HepG2 (cell line): ENCODE measurements at regions of chr3 and their contacts with region 1.

Region 1: GRCh38 chr3:138329127-138329983 is at the start of gene NME9:
- DNase-seq: peak; percentile 87
- ATAC-seq: peak; percentile 97
- H3K4me3 ChIP-seq: peak within 1 kb of the TSS; percentile 60 to 71 (median 64)
- H3K27ac ChIP-seq: no peak within 1 kb of the TSS
- H3K4me1 ChIP-seq: peaks cover 14% of the 10 kb centered on the region
- H3K27me3 ChIP-seq: no peaks in the 10 kb centered on the region
- CTCF ChIP-seq: peak; percentile 77
- EP300 ChIP-seq: no peak
- POLR2A ChIP-seq: no peak
- RAD21 ChIP-seq: 0 out of 2 replicates have a peak, but pooled peaks have one; percentile 17
- total RNA-seq, gene NME9: not detected in 2 replicates

Region 2: DNA sequence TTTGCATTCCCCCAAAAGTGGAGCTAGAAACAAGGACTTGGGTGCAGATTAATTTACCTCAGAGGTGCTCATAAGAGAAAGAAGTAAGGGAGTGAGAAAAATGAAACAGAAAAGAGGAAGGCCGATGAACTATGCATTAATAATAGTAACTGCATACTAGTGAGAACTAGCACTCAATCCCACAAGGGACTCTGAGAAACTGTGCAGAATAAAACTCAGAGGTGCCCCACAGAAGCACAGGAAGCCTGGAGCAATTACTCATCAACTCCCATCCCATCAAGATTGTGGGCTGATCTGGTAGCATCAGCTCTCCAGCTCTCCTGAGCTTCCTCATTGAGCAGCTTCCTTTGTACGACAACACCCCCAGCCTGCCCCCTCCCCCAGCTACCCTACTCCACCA is 268.6 kb before region 1 on chr3:
- CTCF ChIA-PET with region 1: no interaction called
- POLR2A ChIA-PET with region 1: no interaction called
- in situ Hi-C with region 1: no loop called
- intact Hi-C with region 1: no loop called
- DNase-seq: no peak
- ATAC-seq: no peak
- H3K4me3 ChIP-seq: no peak overlapping the region
- H3K27ac ChIP-seq: no peak overlapping the region
- H3K4me1 ChIP-seq: no peaks in the 10 kb centered on the region
- H3K27me3 ChIP-seq: no peaks in the 10 kb centered on the region
- CTCF ChIP-seq: no peak
- EP300 ChIP-seq: no peak
- POLR2A ChIP-seq: no peak
- RAD21 ChIP-seq: no peak

Region 3: GRCh38 chr3:138180375-138181029 is 148.9 kb before region 1 on chr3:
- CTCF ChIA-PET with region 1: no interaction called
- POLR2A ChIA-PET with region 1: no interaction called
- in situ Hi-C with region 1: loop called (anchors 10 kb)
- intact Hi-C with region 1: loop called (anchors 1 kb)
- DNase-seq: peak; percentile 50
- ATAC-seq: peak; percentile 93
- H3K4me3 ChIP-seq: no peak overlapping the region
- H3K27ac ChIP-seq: no peak overlapping the region
- H3K4me1 ChIP-seq: peaks cover 23% of the 10 kb centered on the region
- H3K27me3 ChIP-seq: peaks cover 0 to 2% of the 10 kb centered on the region in 2 experiments; a peak in 2 of 5 replicates
- CTCF ChIP-seq: peak; percentile 81
- EP300 ChIP-seq: no peak
- POLR2A ChIP-seq: no peak
- RAD21 ChIP-seq: peak; percentile 52; the same call in 1 of the 2 replicates

Region 4: GRCh38 chr3:138265745-138266144 is 63.6 kb before region 1 on chr3:
- CTCF ChIA-PET with region 1: no interaction called
- POLR2A ChIA-PET with region 1: no interaction called
- in situ Hi-C with region 1: no loop called
- intact Hi-C with region 1: loop called (anchors 5 kb)
- DNase-seq: no peak
- ATAC-seq: no peak
- H3K4me3 ChIP-seq: no peak overlapping the region
- H3K27ac ChIP-seq: no peak overlapping the region
- H3K4me1 ChIP-seq: no peaks in the 10 kb centered on the region
- H3K27me3 ChIP-seq: no peaks in the 10 kb centered on the region
- CTCF ChIP-seq: no peak
- EP300 ChIP-seq: no peak
- POLR2A ChIP-seq: no peak
- RAD21 ChIP-seq: no peak

Region 5: DNA sequence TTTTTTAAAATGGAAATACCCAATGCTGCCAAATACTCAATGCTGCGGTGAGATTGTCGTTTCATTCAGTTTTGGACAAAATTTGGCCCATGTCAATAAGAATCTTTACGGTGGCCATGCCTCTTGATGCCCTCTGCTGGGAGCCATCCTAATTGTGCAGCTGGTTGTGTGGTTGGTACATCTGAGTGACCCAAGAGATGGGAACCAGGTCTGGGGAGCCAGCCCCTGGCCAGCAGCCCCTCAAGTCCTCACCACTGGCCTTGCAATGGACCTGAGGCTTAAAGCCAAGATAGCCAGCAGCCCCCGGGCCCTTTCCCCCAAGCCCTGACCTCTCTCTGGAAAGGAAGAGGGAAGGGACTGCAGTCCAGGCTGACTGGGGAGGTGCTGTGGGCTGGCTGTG is 68.6 kb after region 1 on chr3:
- CTCF ChIA-PET with region 1: no interaction called
- POLR2A ChIA-PET with region 1: no interaction called
- in situ Hi-C with region 1: no loop called
- intact Hi-C with region 1: loop called (anchors 5 kb)
- DNase-seq: no peak
- ATAC-seq: no peak
- H3K4me3 ChIP-seq: no peak overlapping the region
- H3K27ac ChIP-seq: no peak overlapping the region
- H3K4me1 ChIP-seq: peaks cover 40% of the 10 kb centered on the region
- H3K27me3 ChIP-seq: no peaks in the 10 kb centered on the region
- CTCF ChIP-seq: 0 out of 2 replicates have a peak, but pooled peaks have one; percentile 18
- EP300 ChIP-seq: no peak
- POLR2A ChIP-seq: no peak
- RAD21 ChIP-seq: no peak